Activated CD4-positive, alpha-beta T cell treated with anti-CD3 and anti-CD28 coated beads, Interleukin-2, amount 10 ng/mL, durations not matched to agents 7 days and 5 days (primary cell): ENCODE measurements at regions of chr10 and their contacts with region 1.

Region 1: DNA sequence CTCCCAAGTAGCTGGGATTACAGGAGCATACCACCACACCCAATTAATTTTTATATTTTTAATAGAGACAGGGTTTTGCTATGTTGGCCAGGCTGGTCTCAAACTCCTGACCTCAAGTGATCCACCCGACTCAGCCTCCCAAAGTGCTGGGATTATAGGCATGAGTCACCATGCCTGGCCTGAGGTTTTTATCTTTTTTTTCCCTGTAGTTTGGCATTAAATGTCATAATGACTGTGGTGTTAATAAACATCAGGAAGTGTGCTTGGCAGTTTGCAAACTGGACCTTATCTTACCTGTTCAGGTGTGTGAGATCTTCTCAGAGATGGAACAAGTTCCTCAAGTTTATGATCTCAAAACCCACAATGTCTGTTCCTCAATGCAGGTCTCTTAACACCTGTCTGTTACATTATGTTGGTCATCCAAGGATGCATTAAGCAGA is 79.9 kb downstream of the ARID5B start:
- DNase-seq: no peak
- H3K4me3 Mint-ChIP-seq: no peak overlapping the region
- H3K27ac Mint-ChIP-seq: no peak overlapping the region
- H3K4me1 Mint-ChIP-seq: peaks cover 71% of the 10 kb centered on the region
- H3K27me3 Mint-ChIP-seq: no peaks in the 10 kb centered on the region

Region 2: GRCh38 chr10:61793760-61794703 is 187.4 kb before region 1 on chr10:
- CTCF ChIA-PET with region 1: no interaction called
- POLR2A ChIA-PET with region 1: no interaction called
- DNase-seq: no peak
- H3K4me3 Mint-ChIP-seq: no peak overlapping the region
- H3K27ac Mint-ChIP-seq: no peak overlapping the region
- H3K4me1 Mint-ChIP-seq: peaks cover 3% of the 10 kb centered on the region
- H3K27me3 Mint-ChIP-seq: no peaks in the 10 kb centered on the region

Region 3: DNA sequence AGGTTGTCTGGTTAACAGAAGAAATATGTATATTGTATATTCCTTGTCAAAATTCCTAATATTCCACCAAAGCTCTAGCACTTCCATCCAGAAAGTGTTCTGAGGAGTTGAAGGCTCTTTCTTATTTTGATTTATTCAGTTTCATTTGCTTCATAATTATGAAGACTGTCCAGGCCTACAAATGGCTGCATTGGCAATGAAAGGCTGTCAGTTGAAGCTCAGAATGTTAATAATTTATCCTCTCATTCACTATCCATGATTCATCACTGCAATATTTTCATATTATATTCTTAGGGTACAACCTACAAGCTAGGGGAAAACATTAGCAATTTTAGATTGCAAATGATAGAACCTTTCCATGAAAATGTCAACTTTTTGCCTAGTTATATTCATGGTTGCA is 22.6 kb before region 1 on chr10:
- CTCF ChIA-PET with region 1: no interaction called
- POLR2A ChIA-PET with region 1: no interaction called
- DNase-seq: no peak
- H3K4me3 Mint-ChIP-seq: no peak overlapping the region
- H3K27ac Mint-ChIP-seq: no peak overlapping the region
- H3K4me1 Mint-ChIP-seq: peaks cover 74% of the 10 kb centered on the region
- H3K27me3 Mint-ChIP-seq: no peaks in the 10 kb centered on the region

Region 4: DNA sequence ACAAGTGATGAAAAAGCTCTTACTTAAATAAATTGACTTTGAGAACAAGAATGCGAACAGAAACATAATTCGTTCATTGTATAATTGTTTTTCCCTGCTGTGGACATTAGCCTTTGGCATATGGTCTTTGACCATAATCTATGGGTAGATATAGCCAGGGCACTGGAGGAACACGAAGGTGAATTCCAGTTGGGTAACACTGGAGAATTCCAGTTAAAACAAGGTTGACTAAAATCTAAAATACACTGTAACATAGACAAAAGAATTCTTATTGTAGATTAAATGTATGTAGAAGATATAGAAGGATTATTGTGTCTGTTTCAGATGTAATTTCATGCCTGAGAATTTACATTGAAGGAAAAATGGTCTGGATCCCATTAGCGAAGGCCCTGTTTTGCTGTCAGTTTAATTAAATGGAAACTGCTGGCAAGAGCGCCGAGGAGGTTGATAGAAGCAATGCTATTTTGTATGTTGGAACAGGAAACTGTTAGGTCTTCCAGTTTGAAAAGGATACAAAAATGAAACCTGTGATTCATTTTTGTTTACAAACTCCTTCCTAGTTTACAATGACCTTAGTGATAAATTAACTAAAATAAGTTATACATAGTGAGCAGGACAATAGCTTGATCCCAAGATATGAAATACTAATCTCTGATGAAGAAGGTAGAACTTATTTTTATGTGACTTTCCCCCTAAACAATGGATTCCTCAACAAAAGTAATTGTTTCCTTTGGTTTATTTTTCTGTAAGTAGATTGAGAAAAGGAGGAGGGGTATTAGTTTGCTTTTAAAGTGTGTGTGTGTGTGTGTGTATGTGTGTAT is 11.0 kb before region 1 on chr10:
- CTCF ChIA-PET with region 1: interaction called, 19 read pairs
- POLR2A ChIA-PET with region 1: no interaction called
- DNase-seq: no peak
- H3K4me3 Mint-ChIP-seq: no peak overlapping the region
- H3K27ac Mint-ChIP-seq: peak overlapping the region; percentile 73
- H3K4me1 Mint-ChIP-seq: peaks cover 67% of the 10 kb centered on the region
- H3K27me3 Mint-ChIP-seq: no peaks in the 10 kb centered on the region